ENCODE measurements at regions of chr11 and their contacts with region 1.

Region 1: DNA sequence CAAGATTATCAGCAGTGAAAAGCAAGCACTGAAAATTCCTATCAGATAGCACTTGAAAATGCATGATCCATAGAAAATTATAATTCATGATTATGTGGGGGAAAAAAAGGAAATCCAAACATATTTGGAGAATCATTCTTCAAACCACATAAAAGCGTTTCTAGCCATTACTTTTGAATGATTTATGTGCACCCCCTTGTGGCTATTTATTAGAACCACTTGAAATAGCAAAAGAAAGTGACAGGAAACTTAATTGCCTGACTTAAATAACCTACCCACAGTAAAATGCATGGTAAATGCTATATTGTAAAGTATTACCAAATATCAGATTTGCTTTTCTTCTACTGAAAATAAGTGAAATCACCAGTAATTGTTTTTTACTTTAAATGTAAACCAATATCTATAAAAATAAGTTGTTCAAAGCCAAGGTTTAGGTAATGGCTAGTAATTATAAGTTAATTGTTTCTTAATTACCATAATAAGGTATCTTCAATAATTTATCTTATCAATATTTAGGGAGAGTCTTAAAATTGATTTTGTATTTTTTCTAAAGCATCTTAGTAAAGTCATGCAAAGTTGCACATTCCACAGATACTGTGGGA is 168.5 kb downstream of the ARHGAP42 start:
- DNase-seq: no peak
- H3K4me3 ChIP-seq: no peak overlapping the region
- H3K27ac ChIP-seq: no peak overlapping the region
- H3K4me1 ChIP-seq: no peaks in the 10 kb centered on the region
- H3K27me3 ChIP-seq: no peaks in the 10 kb centered on the region
- CTCF ChIP-seq: peak; percentile 16 to 57 (median 21)
- EP300 ChIP-seq: no peak
- POLR2A ChIP-seq: no peak

Region 2: DNA sequence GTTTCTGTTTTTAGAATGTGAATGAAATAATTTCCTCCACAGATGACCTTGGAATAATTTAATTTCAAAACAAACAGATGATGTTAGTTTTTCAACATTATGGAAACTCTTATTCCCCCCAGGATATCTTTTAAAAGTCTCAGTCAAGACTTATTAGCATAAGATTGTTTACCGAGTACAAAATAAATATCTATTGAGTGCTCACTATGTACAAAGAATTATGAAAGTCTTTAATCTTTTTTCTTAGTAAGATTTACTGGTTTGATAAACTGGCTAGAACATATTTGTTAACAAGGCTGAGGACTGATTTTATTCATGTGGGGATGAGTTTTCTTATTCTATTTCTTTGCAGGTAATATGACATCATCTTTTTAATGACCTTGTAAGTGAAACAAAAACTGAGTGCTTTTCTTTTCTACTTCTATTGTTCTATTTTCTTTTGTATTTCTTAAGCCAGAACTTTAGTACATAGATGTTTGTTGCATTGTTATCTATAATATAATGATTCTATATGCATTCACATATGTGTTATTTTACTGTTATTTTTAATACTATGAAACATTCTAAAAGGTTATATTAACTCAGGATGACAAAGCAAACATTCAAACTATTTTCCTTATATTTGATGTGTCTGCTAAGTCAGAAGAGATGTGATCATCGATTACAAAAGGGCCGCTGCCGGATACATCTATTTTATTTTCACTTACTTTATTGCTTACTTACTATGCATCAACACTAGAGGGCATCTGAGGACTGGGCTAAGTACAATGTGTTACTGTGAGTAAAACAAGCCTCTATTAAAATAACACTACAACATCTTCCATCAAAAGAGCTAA is 279.5 kb before region 1 on chr11:
- intact Hi-C with region 1: loop called in 3 of 4 experiments (anchors 10 kb)
- DNase-seq: no peak
- H3K4me3 ChIP-seq: no peak overlapping the region
- H3K27ac ChIP-seq: no peak overlapping the region
- H3K4me1 ChIP-seq: no peaks in the 10 kb centered on the region
- H3K27me3 ChIP-seq: no peaks in the 10 kb centered on the region
- CTCF ChIP-seq: peak; percentile 44 to 66 (median 65)
- EP300 ChIP-seq: no peak
- POLR2A ChIP-seq: no peak

Region 3: GRCh38 chr11:100687630-100688395 is 167.8 kb before region 1 on chr11:
- intact Hi-C with region 1: loop called (anchors 5 kb)
- DNase-seq: peak; percentile 35 to 58 (median 53)
- H3K4me3 ChIP-seq: peak overlapping the region; percentile 39
- H3K27ac ChIP-seq: peak overlapping the region; percentile 57 to 70
- H3K4me1 ChIP-seq: peaks cover 2% of the 10 kb centered on the region
- H3K27me3 ChIP-seq: no peaks in the 10 kb centered on the region
- CTCF ChIP-seq: peak; percentile 35 to 45 (median 35)
- EP300 ChIP-seq: no peak
- POLR2A ChIP-seq: no peak

Region 4: DNA sequence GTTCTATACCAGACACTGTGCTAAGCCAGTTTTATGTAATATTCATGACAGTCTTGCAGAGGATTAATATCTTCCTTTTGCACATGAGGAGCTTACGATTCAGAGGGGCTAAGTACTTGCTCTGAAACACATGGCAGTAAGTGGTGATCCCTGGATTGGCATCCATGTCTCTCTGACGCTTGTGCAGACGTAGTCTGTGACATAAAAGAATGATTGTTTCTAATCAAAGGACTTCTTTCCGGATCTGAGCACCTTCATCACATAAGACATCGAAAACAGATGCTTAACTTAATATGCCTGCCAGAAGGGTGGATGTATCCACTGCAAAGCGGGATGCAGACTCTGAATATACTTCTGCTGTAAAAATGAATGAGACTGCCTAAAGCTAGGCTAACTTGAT is 93.7 kb before region 1 on chr11:
- intact Hi-C with region 1: no loop called
- DNase-seq: no peak
- H3K4me3 ChIP-seq: no peak overlapping the region
- H3K27ac ChIP-seq: no peak overlapping the region
- H3K4me1 ChIP-seq: peaks cover 2% of the 10 kb centered on the region
- H3K27me3 ChIP-seq: no peaks in the 10 kb centered on the region
- CTCF ChIP-seq: no peak
- EP300 ChIP-seq: no peak
- POLR2A ChIP-seq: no peak

Measured in ovary (tissue), 10 donors.